ENCODE measurements at regions of chr11 and their contacts with region 1.

Region 1: GRCh38 chr11:86671682-86672621 is at the start of gene ME3:
- DNase-seq: peak; percentile 79 to 88 (median 87)
- ATAC-seq: peak; percentile 68 to 81 (median 78)
- H3K4me3 ChIP-seq: peak within 1 kb of the TSS; percentile 62 to 91 (median 75)
- H3K27ac ChIP-seq: peak within 1 kb of the TSS; percentile 84 to 98 (median 94)
- H3K4me1 ChIP-seq: peaks cover 0 to 45% (median 24%) of the 10 kb centered on the region in 12 donors
- H3K27me3 ChIP-seq: no peaks in the 10 kb centered on the region
- CTCF ChIP-seq: peak in 3 of 12 donors; percentile 6 to 15 (median 11)
- POLR2A ChIP-seq: peak in 1 of 2 donors; percentile 43
- total RNA-seq, gene ME3: 26.6 to 51.5 (median 33.5) TPM

Region 2: GRCh38 chr11:86456052-86456939 is 215.7 kb before region 1 on chr11:
- intact Hi-C with region 1: loop called in 5 of 10 experiments (anchors 5 to 10 kb)
- DNase-seq: peak; percentile 82 to 86 (median 85)
- ATAC-seq: peak; percentile 47 to 83 (median 78)
- H3K4me3 ChIP-seq: no peak overlapping the region
- H3K27ac ChIP-seq: peak overlapping the region in 6 of 12 donors; percentile 20 to 61 (median 39)
- H3K4me1 ChIP-seq: peaks cover 3 to 55% (median 37%) of the 10 kb centered on the region in 12 donors
- H3K27me3 ChIP-seq: no peaks in the 10 kb centered on the region
- CTCF ChIP-seq: peak; percentile 83 to 97 (median 91)
- POLR2A ChIP-seq: no peak

Region 3: DNA sequence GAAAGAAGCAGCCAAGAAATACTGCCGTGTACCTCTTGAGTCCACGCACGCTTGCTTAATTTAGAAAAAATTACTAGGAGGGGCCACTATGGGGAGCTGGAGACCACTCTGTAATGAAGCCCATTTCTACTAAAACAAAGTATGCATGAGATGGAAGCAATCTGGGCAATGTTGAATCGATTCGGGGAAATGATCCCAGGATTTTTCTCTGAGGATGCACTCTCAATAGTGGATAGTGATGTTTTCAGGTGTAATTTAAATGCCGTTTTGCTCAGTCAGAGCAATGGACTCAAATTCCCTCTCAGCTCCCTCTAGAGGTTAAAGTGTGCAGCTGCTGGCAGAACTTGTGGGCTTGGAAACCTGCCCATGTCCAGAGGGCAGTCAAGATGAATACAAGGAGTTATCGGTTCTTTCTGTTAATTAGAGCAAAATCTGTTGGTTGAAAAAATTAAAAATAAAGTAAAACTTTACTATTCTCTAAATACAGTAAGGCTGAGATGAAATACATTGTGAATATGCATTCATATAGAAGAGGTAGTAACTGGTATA is 63.6 kb before region 1 on chr11:
- intact Hi-C with region 1: loop called in 1 of 10 experiments (anchors 5 kb)
- DNase-seq: peak; percentile 58 to 76 (median 75)
- ATAC-seq: peak; percentile 43 to 88 (median 83)
- H3K4me3 ChIP-seq: peak overlapping the region in 3 of 12 donors; percentile 8 to 16 (median 8)
- H3K27ac ChIP-seq: peak overlapping the region in 4 of 12 donors; percentile 1 to 39 (median 8)
- H3K4me1 ChIP-seq: peaks cover 0 to 43% (median 22%) of the 10 kb centered on the region in 12 donors
- H3K27me3 ChIP-seq: no peaks in the 10 kb centered on the region
- CTCF ChIP-seq: peak; percentile 86 to 98 (median 95)
- POLR2A ChIP-seq: no peak

Region 4: DNA sequence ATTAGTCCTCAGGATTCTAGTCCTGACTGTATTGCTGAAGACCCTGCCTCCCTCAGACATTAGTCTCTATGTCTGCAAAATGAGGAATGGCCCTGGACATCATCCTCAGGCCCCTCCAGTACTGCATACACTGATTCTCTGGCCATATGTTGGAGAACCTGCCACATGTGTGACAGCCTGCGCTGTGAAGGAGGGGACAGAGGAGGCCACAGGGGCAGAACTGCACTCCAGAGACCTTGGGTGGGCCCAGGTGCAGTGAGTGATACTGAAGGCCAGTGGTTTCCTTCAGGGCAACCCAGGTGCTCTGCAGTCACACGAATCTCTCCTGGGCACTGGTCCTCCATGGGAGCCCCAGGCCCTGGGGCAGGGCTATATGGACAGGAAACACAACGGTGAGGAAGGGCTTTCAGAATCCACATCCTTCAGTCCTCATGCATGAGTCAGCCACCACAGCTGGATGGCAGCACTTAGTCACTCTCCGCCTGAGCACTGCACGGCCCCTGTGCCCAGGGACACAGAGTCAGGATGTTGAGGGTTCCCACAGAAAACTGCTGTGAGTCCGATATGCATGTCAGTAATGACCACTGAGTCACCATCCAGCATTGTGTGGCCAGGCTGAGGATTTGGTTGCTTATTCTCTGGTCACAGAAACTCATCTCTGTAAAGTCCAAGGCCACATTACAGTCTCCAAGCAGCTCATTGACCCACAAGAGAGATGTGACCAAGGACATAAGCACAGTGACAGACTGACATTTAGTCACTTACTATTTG is 39.3 kb before region 1 on chr11:
- intact Hi-C with region 1: loop called in 6 of 10 experiments (anchors 5 kb)
- DNase-seq: peak in 1 of 5 donors; percentile 55
- ATAC-seq: peak in 3 of 4 donors; percentile 32 to 57 (median 55)
- H3K4me3 ChIP-seq: no peak overlapping the region
- H3K27ac ChIP-seq: no peak overlapping the region
- H3K4me1 ChIP-seq: peaks cover 0 to 44% (median 30%) of the 10 kb centered on the region in 12 donors
- H3K27me3 ChIP-seq: no peaks in the 10 kb centered on the region
- CTCF ChIP-seq: peak in 7 of 12 donors; percentile 18 to 46 (median 32)
- POLR2A ChIP-seq: no peak

Region 5: GRCh38 chr11:86740709-86741483 is 68.9 kb after region 1 on chr11:
- intact Hi-C with region 1: loop called in 1 of 10 experiments (anchors 5 kb)
- DNase-seq: peak in 4 of 5 donors; percentile 43 to 66 (median 46)
- ATAC-seq: peak; percentile 60 to 78 (median 73)
- H3K4me3 ChIP-seq: no peak overlapping the region
- H3K27ac ChIP-seq: peak overlapping the region; percentile 62 to 88 (median 77)
- H3K4me1 ChIP-seq: peaks cover 4 to 65% (median 30%) of the 10 kb centered on the region in 12 donors
- H3K27me3 ChIP-seq: no peaks in the 10 kb centered on the region
- CTCF ChIP-seq: no peak
- POLR2A ChIP-seq: no peak

Region 6: DNA sequence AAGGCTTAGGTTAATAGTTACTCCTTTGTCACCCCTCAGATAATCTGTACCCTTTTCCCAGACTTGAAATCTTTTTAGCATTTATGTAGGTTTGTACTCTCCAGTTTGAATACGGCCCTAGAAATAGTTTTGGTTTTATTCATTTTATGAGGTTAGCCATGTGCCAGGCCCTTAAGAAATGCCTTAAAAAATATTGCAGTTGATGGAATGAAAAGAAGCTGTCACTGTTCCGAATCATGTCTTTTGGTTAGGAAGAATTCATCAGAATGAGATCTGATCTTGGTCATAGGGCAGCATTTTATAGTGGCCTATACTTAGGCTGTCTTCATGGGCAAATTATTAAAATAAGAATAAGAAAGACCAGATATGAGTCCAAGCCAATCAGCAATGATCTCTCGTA is 113.6 kb after region 1 on chr11:
- intact Hi-C with region 1: loop called in 1 of 10 experiments (anchors 5 kb)
- DNase-seq: no peak
- ATAC-seq: no peak
- H3K4me3 ChIP-seq: no peak overlapping the region
- H3K27ac ChIP-seq: no peak overlapping the region
- H3K4me1 ChIP-seq: no peaks in the 10 kb centered on the region
- H3K27me3 ChIP-seq: no peaks in the 10 kb centered on the region
- CTCF ChIP-seq: no peak
- POLR2A ChIP-seq: no peak

Region 7: DNA sequence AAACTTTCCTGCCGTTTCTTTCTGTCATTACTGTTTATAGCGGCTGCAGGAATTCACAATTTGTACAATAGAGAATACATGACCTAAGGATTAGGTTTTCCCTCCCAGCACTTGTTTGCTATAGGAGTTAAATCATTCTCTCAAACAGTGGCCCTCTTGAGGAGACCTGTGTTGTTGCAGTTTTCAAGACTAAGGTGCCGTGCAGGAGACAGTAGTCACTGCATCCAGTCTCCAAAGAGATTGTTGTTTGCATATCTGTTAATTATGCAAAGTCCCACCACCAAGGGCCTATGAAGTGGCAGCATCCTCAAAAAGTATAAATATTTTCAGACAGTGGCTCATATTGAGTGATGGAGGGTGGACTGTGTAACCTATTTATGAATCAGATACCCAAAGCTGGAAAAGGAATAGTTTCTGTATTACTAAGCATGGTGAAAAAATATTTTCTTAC is 130.7 kb after region 1 on chr11:
- intact Hi-C with region 1: loop called in 5 of 10 experiments (anchors 2 to 10 kb)
- DNase-seq: no peak
- ATAC-seq: peak in 2 of 4 donors; percentile 20 to 47
- H3K4me3 ChIP-seq: peak overlapping the region in 6 of 12 donors; percentile 15 to 92 (median 75)
- H3K27ac ChIP-seq: peak overlapping the region in 1 of 12 donors; percentile 83
- H3K4me1 ChIP-seq: peaks cover 0 to 39% (median 18%) of the 10 kb centered on the region in 12 donors
- H3K27me3 ChIP-seq: peaks cover 0 to 15% (median 0%) of the 10 kb centered on the region in 9 donors
- CTCF ChIP-seq: peak; percentile 28 to 64 (median 44)
- POLR2A ChIP-seq: no peak

Region 8: GRCh38 chr11:87056103-87056502 is 384.2 kb after region 1 on chr11:
- intact Hi-C with region 1: no loop called
- DNase-seq: no peak
- ATAC-seq: no peak
- H3K4me3 ChIP-seq: no peak overlapping the region
- H3K27ac ChIP-seq: no peak overlapping the region
- H3K4me1 ChIP-seq: peaks cover 0 to 9% (median 0%) of the 10 kb centered on the region in 12 donors
- H3K27me3 ChIP-seq: no peaks in the 10 kb centered on the region
- CTCF ChIP-seq: no peak
- POLR2A ChIP-seq: no peak